Activated CD4-positive, alpha-beta memory T cell treated with anti-CD3 and anti-CD28 coated beads, Interleukin-2, amount 10 ng/mL, durations not matched to agents 7 days and 5 days (primary cell): ENCODE measurements at regions of chr1 and their contacts with region 1.

Region 1: DNA sequence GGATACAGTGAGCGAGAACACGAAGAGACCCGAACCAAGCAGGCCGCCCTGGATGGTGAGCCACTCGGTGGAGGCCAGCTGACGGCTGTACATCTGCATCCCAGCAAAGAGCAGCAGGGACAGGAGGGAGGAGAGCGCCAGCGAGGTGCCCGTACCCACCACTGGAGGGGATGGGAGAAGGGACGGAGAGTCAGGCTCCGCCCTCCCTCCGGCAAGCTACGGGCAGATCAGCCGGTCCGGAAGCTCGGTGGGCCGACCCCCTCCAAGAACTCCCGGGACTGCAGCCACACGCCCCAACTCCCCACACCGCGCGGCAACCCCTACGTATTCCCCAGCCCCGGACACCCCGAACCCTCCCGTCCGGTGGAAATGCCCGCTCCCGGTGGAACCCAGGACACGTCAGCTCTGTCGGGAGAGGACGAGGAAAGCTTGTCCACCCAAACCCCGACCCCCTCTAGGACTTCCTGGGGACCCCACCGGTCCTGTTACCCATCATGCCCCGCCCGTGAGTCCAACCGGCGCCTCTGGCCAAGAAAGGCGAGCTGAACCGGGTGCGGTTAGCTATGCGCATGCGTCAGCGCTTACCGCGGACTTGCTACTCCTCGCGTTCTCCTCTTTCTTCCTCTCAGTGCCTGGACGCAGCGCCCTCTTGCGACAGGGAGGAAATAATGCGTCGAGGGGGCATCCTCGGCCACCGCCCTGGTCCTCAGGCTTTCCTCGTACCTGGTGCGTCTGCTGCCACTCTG is at the start of gene KRTCAP2:
- DNase-seq: peak; percentile 96
- H3K4me3 Mint-ChIP-seq: peak within 1 kb of the TSS; percentile 97
- H3K27ac Mint-ChIP-seq: peak within 1 kb of the TSS; percentile 96
- H3K4me1 Mint-ChIP-seq: peaks cover 64% of the 10 kb centered on the region
- H3K27me3 Mint-ChIP-seq: no peaks in the 10 kb centered on the region
- total RNA-seq, gene KRTCAP2: 203 to 224 TPM

Region 2: GRCh38 chr1:155050560-155051341 is 122.2 kb before region 1 on chr1 and contains the start of gene ADAM15:
- CTCF ChIA-PET with region 1: interaction called, 16 read pairs
- POLR2A ChIA-PET with region 1: no interaction called
- DNase-seq: peak; percentile 86
- H3K4me3 Mint-ChIP-seq: peak within 1 kb of the TSS; percentile 84
- H3K27ac Mint-ChIP-seq: peak within 1 kb of the TSS; percentile 80
- H3K4me1 Mint-ChIP-seq: peaks cover 30% of the 10 kb centered on the region
- H3K27me3 Mint-ChIP-seq: no peaks in the 10 kb centered on the region
- total RNA-seq, gene ADAM15: 73.9 to 76.4 TPM

Region 3: GRCh38 chr1:155091071-155091709 is 81.7 kb before region 1 on chr1:
- CTCF ChIA-PET with region 1: interaction called, 209 read pairs
- POLR2A ChIA-PET with region 1: interaction called, 18 read pairs
- DNase-seq: peak; percentile 81
- H3K4me3 Mint-ChIP-seq: no peak overlapping the region
- H3K27ac Mint-ChIP-seq: no peak overlapping the region
- H3K4me1 Mint-ChIP-seq: peaks cover 10% of the 10 kb centered on the region
- H3K27me3 Mint-ChIP-seq: peaks cover 22% of the 10 kb centered on the region

Region 4: DNA sequence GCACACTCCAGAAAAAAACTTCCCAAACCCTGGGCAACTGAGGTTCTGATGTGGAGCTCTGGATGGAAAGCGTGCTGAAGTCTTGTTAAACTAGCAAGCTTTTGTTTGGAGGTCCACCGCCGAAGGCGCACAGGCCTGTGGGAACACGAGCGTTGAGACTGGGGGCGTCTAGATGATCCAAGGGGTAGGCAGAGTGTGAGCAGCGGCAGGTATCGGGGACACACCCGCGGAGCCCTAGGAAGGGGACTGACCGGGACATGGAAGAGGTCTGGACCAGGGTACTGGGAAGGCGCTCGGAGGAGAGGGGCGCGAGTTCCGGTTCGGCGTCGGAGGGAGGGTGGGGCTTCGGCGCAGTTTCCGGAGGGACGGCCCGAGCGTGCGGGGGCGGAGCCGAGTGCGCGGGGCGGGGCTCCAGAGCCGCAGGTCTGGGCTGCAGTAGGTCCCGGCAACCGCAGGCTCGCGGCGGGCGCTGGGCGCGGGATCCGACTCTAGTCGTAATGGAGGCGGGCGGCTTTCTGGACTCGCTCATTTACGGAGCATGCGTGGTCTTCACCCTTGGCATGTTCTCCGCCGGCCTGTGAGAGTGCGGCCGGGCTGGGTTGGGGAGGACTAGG is 37.4 kb before region 1 on chr1 and contains the start of gene SLC50A1:
- CTCF ChIA-PET with region 1: interaction called, 28 read pairs
- POLR2A ChIA-PET with region 1: interaction called, 21 read pairs
- DNase-seq: peak; percentile 95
- H3K4me3 Mint-ChIP-seq: peak within 1 kb of the TSS; percentile 97
- H3K27ac Mint-ChIP-seq: peak within 1 kb of the TSS; percentile 98
- H3K4me1 Mint-ChIP-seq: peaks cover 49% of the 10 kb centered on the region
- H3K27me3 Mint-ChIP-seq: peaks cover 5% of the 10 kb centered on the region
- total RNA-seq, gene SLC50A1: 50.4 to 52.6 TPM

Region 5: DNA sequence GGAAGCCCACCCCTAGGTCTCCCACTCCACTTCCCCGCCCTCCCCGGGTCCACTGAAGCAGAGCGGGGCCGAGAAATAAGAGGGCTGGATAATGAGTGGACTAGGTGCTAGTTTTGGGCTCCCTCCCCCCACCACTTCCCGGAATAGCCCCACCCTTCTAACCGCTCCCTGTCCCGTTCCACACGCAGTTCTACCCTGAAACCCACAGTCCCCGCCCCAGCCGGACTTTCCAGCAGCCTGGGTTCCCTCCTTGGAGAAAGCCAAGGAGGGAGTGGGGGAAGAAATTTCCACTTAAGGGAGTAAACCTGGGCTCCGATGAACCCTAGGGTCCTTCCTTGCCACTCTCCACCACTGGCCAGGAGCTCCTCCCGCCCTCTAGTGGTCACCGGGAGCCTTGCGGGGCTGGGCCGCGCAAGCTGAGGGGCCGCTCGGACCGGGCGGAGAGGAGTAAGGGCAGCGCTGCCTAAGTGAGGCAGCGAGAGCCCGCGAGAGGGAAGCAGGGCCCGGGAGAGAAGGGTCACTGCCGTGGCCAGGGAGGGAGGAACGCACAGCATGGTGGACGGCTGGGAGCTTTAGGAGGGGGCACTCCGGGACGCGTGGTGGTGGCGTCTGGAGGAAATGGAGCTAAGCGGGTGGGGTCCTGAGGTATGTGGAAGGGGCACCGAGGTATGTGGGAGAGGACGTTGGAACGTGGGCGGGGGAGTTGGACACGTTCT is 20.5 kb after region 1 on chr1:
- CTCF ChIA-PET with region 1: interaction called, 93 read pairs
- POLR2A ChIA-PET with region 1: interaction called, 133 read pairs
- DNase-seq: peak; percentile 81
- H3K4me3 Mint-ChIP-seq: peak overlapping the region; percentile 76
- H3K27ac Mint-ChIP-seq: peak overlapping the region; percentile 98
- H3K4me1 Mint-ChIP-seq: peaks cover 40% of the 10 kb centered on the region
- H3K27me3 Mint-ChIP-seq: no peaks in the 10 kb centered on the region

Region 6: GRCh38 chr1:155227261-155228095 is 54.6 kb after region 1 on chr1:
- CTCF ChIA-PET with region 1: interaction called, 12 read pairs
- POLR2A ChIA-PET with region 1: interaction called, 58 read pairs
- DNase-seq: peak; percentile 100
- H3K4me3 Mint-ChIP-seq: peak overlapping the region; percentile 81
- H3K27ac Mint-ChIP-seq: peak overlapping the region; percentile 89
- H3K4me1 Mint-ChIP-seq: peaks cover 44% of the 10 kb centered on the region
- H3K27me3 Mint-ChIP-seq: no peaks in the 10 kb centered on the region